Tibial artery (tissue), 4 donors: ENCODE measurements at regions of chr7 and their contacts with region 1.

Region 1: DNA sequence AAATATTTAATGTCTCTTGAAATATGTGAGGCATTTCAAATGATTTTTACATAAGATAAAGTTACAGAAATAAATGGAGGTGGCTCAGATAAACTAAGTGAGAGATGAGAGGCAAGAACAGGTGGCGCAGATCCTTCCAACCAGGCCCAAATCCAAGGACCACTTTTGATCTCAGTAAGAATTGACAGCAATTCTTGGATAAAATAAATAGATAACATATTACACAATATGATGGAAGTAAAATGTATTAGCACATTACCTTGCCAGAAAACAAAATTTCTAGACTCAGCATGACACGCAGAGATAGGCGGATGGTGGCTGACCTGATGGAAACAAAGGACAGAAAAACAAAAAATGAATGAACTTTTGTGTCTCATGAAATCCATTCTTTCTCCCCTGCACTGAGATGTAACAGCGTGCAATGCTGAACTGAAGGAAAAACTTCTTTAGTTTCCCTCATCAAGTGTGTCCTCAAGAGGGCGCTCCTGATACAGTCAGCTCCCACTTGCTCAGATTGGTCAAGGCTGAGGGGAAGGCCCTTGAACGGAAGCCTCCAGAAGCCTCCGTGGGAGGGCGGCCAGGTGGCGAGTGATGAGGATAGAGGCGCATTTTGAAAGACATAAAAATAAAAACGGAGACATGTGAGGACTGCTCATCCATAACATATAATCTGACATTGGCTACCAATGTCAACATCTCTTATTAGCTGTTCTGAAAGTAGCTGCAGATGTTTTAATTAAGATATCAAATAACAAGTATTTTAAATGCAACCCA is 62.8 kb upstream of the GSDME start:
- DNase-seq: peak; percentile 86 to 87
- H3K4me3 ChIP-seq: no peak overlapping the region
- H3K27ac ChIP-seq: no peak overlapping the region
- H3K4me1 ChIP-seq: no peaks in the 10 kb centered on the region
- H3K27me3 ChIP-seq: no peaks in the 10 kb centered on the region
- CTCF ChIP-seq: peak; percentile 70 to 74

Region 2: DNA sequence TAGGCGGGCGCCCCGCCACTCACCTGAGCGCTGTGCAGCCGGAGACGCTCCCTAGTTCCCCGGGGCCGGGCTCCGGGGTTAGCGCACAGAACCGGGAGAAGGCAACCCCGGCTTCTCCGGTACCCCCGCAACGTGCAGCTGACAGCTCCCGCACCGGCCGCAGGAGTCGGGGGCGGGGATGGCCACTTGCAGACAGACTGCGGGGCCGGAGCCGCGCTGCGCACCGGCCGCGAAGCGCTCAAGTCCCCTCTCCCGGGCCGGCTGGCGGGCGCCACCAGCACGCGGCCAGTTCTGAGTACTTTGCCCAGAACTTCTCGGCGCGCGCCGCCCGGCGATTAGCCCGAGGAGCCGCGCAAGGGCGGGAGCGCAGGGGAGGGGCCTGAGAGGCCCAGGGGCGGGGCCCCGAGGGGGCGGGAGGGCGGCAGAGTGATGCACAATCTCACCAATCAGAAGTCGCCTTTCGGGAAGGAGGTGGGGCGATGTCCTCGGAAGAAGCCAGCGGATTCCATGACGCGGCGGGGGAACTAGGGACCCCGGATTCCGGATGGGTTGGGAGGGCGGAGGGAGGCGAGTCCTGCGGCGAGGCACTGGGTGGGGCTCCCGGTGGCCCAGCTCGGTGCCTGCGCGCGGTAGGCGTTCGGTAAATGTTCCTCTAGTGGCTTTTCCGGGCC is 159.9 kb after region 1 on chr7 and contains the start of gene OSBPL3:
- intact Hi-C with region 1: loop called (anchors 10 kb)
- DNase-seq: peak; percentile 92 to 96
- H3K4me3 ChIP-seq: peak within 1 kb of the TSS; percentile 57 to 71
- H3K27ac ChIP-seq: peak within 1 kb of the TSS; percentile 57 to 70
- H3K4me1 ChIP-seq: peaks cover 0 to 22% (median 14%) of the 10 kb centered on the region in 4 donors
- H3K27me3 ChIP-seq: peaks cover 0 to 5% of the 10 kb centered on the region in 2 donors
- CTCF ChIP-seq: no peak

Region 3: DNA sequence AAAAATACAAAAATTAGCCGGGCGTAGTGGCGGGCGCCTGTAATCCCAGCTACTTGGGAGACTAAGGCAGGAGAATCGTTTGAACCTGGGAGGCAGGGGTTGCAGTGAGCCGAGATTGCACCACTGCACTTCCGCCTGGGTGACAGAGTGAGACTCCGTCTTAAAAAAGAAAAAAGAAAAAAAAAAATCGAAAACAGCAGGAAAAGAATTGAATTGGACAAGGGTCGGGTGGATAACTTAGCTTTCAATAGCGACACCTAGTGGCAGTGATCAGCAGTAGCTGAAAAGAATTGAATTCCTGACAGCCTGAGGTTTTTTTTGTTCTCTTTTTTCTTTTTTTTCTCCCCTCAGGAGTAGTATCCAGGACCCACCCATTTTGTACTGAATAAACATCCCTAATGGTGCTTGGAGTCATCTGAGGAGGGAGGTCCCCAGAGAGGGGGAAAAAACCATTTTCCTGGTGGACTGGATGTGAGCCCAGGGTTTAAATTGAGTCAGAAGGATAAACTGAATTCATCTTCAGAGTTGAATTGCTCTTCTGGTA is 249.9 kb after region 1 on chr7:
- intact Hi-C with region 1: loop called (anchors 2 kb)
- DNase-seq: peak; percentile 46 to 62
- H3K4me3 ChIP-seq: peak overlapping the region in 1 of 2 donors; percentile 25
- H3K27ac ChIP-seq: no peak overlapping the region
- H3K4me1 ChIP-seq: peaks cover 0 to 5% (median 2%) of the 10 kb centered on the region in 4 donors
- H3K27me3 ChIP-seq: no peaks in the 10 kb centered on the region
- CTCF ChIP-seq: peak; percentile 75 to 85